ENCODE measurements at regions of chr2 and their contacts with region 1.

Region 1: GRCh38 chr2:64932371-64933216 is 56.6 kb upstream of the SLC1A4 start:
- DNase-seq: peak; percentile 68
- ATAC-seq: peak; percentile 75
- H3K4me3 ChIP-seq: peak overlapping the region; percentile 51 to 66 (median 59)
- H3K4me3 Mint-ChIP-seq: peak overlapping the region; percentile 83
- H3K27ac ChIP-seq: peak overlapping the region; percentile 74 to 87
- H3K27ac Mint-ChIP-seq: peak overlapping the region; percentile 83
- H3K4me1 ChIP-seq: peaks cover 92 to 95% of the 10 kb centered on the region in 2 donors
- H3K4me1 Mint-ChIP-seq: peaks cover 88% of the 10 kb centered on the region
- H3K27me3 ChIP-seq: no peaks in the 10 kb centered on the region
- H3K27me3 Mint-ChIP-seq: no peaks in the 10 kb centered on the region
- CTCF ChIP-seq: no peak

Region 2: DNA sequence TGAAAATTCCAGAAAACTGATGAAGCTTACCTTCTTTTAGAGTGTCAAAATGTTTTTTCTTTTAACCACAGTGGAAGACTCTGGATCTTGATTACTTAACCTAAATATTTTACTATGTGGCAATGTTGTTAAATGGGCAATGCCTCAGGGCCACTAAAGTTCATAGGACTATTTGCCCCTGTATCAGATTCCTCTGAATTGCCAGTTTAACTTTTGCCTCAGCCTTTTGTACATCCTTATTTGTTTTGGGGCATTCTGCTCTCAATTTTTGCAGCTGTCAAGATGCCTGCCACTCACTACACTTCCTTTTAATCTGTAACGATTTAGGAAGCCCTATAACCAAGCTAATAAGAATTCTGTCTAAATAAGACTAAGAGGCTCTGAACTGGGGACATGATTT is 247.2 kb before region 1 on chr2:
- CTCF ChIA-PET with region 1: no interaction called
- POLR2A ChIA-PET with region 1: no interaction called
- intact Hi-C with region 1: no loop called
- DNase-seq: no peak
- ATAC-seq: no peak
- H3K4me3 ChIP-seq: no peak overlapping the region
- H3K4me3 Mint-ChIP-seq: no peak overlapping the region
- H3K27ac ChIP-seq: no peak overlapping the region
- H3K27ac Mint-ChIP-seq: peak overlapping the region; percentile 7
- H3K4me1 ChIP-seq: peaks cover 22 to 24% of the 10 kb centered on the region in 2 donors
- H3K4me1 Mint-ChIP-seq: peaks cover 35% of the 10 kb centered on the region
- H3K27me3 ChIP-seq: no peaks in the 10 kb centered on the region
- H3K27me3 Mint-ChIP-seq: no peaks in the 10 kb centered on the region
- CTCF ChIP-seq: no peak

Region 3: GRCh38 chr2:64831134-64831976 is 101.2 kb before region 1 on chr2:
- CTCF ChIA-PET with region 1: no interaction called
- POLR2A ChIA-PET with region 1: no interaction called
- intact Hi-C with region 1: no loop called
- DNase-seq: peak; percentile 82
- ATAC-seq: peak; percentile 91
- H3K4me3 ChIP-seq: peak overlapping the region in 3 of 5 experiments; percentile 11 to 38 (median 16)
- H3K4me3 Mint-ChIP-seq: peak overlapping the region; percentile 63
- H3K27ac ChIP-seq: no peak overlapping the region
- H3K27ac Mint-ChIP-seq: peak overlapping the region; percentile 77
- H3K4me1 ChIP-seq: peaks cover 8 to 12% of the 10 kb centered on the region in 2 donors
- H3K4me1 Mint-ChIP-seq: peaks cover 13% of the 10 kb centered on the region
- H3K27me3 ChIP-seq: no peaks in the 10 kb centered on the region
- H3K27me3 Mint-ChIP-seq: no peaks in the 10 kb centered on the region
- CTCF ChIP-seq: peak; percentile 96

Region 4: DNA sequence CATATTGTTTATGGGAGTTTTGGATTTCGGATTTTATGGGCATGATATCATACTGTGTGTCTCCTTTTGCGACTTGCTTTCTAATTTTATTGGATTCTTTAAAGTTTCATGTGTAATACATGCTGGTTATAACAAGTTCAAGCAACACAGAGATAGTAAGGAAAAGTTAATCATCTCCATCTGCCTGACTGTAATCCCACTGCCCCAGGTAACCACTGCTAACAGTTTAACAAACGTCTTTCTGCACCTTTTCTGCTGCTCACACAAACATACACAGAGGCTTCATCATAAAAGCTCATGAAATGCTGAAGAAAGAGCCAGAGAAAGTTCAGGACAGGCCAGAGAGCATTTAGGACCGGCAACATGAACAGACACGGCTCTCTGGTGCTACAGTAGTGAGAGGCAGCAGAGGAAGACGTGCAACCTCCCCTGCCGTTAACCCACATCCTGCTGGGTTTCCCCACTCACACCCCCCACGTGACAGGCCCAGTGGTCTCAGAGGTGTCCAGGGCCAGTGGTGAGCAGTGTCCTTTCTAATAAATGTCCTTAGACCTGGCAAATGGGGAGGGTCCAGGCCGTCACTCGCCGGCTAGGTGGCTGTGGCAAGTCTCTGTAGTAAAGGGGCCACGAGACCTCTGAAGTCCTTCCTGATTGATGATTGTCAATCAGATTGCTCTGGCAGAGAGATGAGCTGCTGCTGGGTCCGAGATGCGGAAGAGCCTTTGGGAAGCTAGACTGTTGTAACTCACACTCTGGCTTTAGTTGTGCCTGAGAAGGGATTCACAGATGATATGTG is 13.6 kb after region 1 on chr2:
- CTCF ChIA-PET with region 1: interaction called, 9 read pairs
- POLR2A ChIA-PET with region 1: interaction called, 6 read pairs
- intact Hi-C with region 1: loop called (anchors 2 kb)
- DNase-seq: peak; percentile 77
- ATAC-seq: peak; percentile 89
- H3K4me3 ChIP-seq: peak overlapping the region in 4 of 5 experiments; percentile 3 to 49 (median 19)
- H3K4me3 Mint-ChIP-seq: peak overlapping the region; percentile 82
- H3K27ac ChIP-seq: peak overlapping the region; percentile 87
- H3K27ac Mint-ChIP-seq: peak overlapping the region; percentile 94
- H3K4me1 ChIP-seq: peaks cover 38 to 43% of the 10 kb centered on the region in 2 donors
- H3K4me1 Mint-ChIP-seq: peaks cover 64% of the 10 kb centered on the region
- H3K27me3 ChIP-seq: no peaks in the 10 kb centered on the region
- H3K27me3 Mint-ChIP-seq: no peaks in the 10 kb centered on the region
- CTCF ChIP-seq: no peak

Region 5: DNA sequence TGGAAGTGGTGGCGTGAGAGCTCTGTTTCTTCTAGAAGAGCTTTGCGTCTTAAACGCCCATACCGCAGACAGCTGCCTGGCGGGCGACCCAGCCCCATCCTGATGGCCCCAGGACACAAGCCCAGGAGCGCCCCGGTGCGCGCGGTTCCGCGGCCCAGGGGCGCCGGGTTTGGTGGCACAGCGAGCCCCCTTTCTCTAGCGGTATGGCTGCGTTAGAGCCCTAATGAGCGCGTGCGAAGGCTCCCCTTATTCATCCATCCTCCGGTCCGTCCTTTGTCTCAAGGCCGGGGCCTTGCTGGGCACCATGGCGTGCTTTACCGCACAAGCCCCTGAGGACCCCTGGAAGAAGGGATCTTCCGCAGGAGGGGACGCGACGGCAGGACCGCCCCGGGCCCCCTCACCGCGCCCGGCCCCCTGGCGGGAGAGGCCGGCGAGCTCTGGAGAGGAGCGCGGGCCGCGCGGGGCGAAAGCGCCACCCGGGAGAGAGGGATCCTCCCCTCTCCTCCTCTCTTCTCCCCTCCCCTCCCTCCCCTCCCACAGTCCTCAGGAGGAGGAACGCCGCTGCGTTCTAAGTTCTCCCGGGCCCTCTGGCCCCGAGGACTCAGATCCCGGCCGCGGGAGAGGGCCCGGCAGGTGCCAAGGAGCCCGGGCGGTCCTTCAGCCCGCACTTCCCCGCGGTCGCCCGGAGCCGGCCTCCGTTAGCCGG is 56.0 kb after region 1 on chr2:
- CTCF ChIA-PET with region 1: interaction called, 4 read pairs
- POLR2A ChIA-PET with region 1: interaction called, 5 read pairs
- intact Hi-C with region 1: loop called (anchors 2 kb)
- DNase-seq: peak; percentile 75
- ATAC-seq: peak; percentile 33
- H3K4me3 ChIP-seq: peak overlapping the region; percentile 53 to 87 (median 81)
- H3K4me3 Mint-ChIP-seq: peak overlapping the region; percentile 92
- H3K27ac ChIP-seq: peak overlapping the region in 1 of 2 donors; percentile 53
- H3K27ac Mint-ChIP-seq: peak overlapping the region; percentile 84
- H3K4me1 ChIP-seq: peaks cover 17 to 24% of the 10 kb centered on the region in 2 donors
- H3K4me1 Mint-ChIP-seq: peaks cover 37% of the 10 kb centered on the region
- H3K27me3 ChIP-seq: no peaks in the 10 kb centered on the region
- H3K27me3 Mint-ChIP-seq: no peaks in the 10 kb centered on the region
- CTCF ChIP-seq: peak; percentile 48

Region 6: GRCh38 chr2:65025453-65026123 is 93.0 kb after region 1 on chr2:
- CTCF ChIA-PET with region 1: interaction called, 10 read pairs
- POLR2A ChIA-PET with region 1: interaction called, 6 read pairs
- intact Hi-C with region 1: loop called (anchors 1 kb)
- DNase-seq: peak; percentile 66
- ATAC-seq: peak; percentile 31
- H3K4me3 ChIP-seq: peak overlapping the region in 1 of 5 experiments; percentile 24
- H3K4me3 Mint-ChIP-seq: peak overlapping the region; percentile 72
- H3K27ac ChIP-seq: peak overlapping the region; percentile 75 to 86
- H3K27ac Mint-ChIP-seq: peak overlapping the region; percentile 90
- H3K4me1 ChIP-seq: peaks cover 55 to 69% of the 10 kb centered on the region in 2 donors
- H3K4me1 Mint-ChIP-seq: peaks cover 56% of the 10 kb centered on the region
- H3K27me3 ChIP-seq: no peaks in the 10 kb centered on the region
- H3K27me3 Mint-ChIP-seq: no peaks in the 10 kb centered on the region
- CTCF ChIP-seq: no peak

Region 7: GRCh38 chr2:65129826-65130663 is 197.5 kb after region 1 on chr2 and contains the start of gene RAB1A:
- CTCF ChIA-PET with region 1: no interaction called
- POLR2A ChIA-PET with region 1: interaction called, 6 read pairs
- intact Hi-C with region 1: loop called (anchors 5 kb)
- DNase-seq: peak; percentile 99
- ATAC-seq: peak; percentile 88
- H3K4me3 ChIP-seq: peak within 1 kb of the TSS; percentile 96 to 97 (median 97)
- H3K4me3 Mint-ChIP-seq: peak within 1 kb of the TSS; percentile 100
- H3K27ac ChIP-seq: peak within 1 kb of the TSS; percentile 94 to 98
- H3K27ac Mint-ChIP-seq: peak within 1 kb of the TSS; percentile 100
- H3K4me1 ChIP-seq: peaks cover 23 to 25% of the 10 kb centered on the region in 2 donors
- H3K4me1 Mint-ChIP-seq: peaks cover 38% of the 10 kb centered on the region
- H3K27me3 ChIP-seq: no peaks in the 10 kb centered on the region
- H3K27me3 Mint-ChIP-seq: no peaks in the 10 kb centered on the region
- CTCF ChIP-seq: no peak
- total RNA-seq, gene RAB1A: 42.2 and 43.7 TPM in 2 replicates